ENCODE measurements at regions of chr11 and their contacts with region 1.

Region 1: GRCh38 chr11:9613118-9613829 is 39.8 kb downstream of the WEE1 start:
- DNase-seq: peak; percentile 97
- H3K4me3 ChIP-seq: peak overlapping the region; percentile 32 to 60 (median 48)
- H3K27ac ChIP-seq: peak overlapping the region; percentile 90 to 98 (median 98)
- H3K4me1 ChIP-seq: peaks cover 0 to 26% (median 18%) of the 10 kb centered on the region in 4 donors
- H3K27me3 ChIP-seq: no peaks in the 10 kb centered on the region
- CTCF ChIP-seq: peak; percentile 84 to 97 (median 92)
- EP300 ChIP-seq: peak in 1 of 4 donors; percentile 69
- POLR2A ChIP-seq: peak in 1 of 2 donors; percentile 50

Region 2: DNA sequence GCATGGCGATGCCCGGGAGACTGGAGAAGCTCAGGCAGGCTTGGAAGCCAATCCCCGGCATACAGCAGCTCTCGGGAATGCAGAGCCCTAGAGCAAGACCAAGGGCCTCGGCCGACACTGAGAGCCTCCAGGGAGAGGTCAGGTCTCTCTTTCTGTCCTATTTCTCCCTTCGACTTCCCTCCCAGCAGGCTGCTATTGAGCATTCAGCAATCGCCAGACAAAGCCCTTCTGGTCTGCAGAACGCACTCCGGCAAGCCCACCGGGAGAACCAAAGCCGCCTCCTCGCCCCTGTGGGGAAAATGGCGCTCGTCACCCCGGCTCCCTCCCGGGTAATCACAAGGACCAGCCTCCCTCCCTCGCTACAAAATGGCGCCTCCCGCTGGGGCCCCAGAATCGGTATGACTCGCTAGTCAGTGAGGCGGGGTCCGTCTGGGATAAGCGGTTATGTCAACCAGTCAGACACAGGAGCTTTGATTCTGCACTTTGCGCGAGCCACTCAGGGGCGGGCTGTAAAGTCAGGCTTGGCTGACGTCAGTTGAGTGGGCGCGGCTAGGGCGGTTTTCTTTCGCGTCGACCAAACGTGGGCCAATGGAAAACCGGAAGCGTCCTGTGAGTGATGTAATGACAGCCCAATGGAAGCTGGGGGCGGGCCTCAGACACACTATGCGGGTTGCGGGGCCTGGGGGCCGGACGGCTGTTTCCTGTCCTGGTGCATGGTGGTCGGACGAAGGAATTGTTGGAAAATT is 152.8 kb before region 1 on chr11 and contains the start of gene ZNF143:
- intact Hi-C with region 1: loop called (anchors 2 kb)
- DNase-seq: peak; percentile 100
- H3K4me3 ChIP-seq: peak within 1 kb of the TSS; percentile 68 to 95 (median 82)
- H3K27ac ChIP-seq: peak within 1 kb of the TSS; percentile 95 to 100 (median 100)
- H3K4me1 ChIP-seq: peaks cover 0 to 27% (median 20%) of the 10 kb centered on the region in 4 donors
- H3K27me3 ChIP-seq: no peaks in the 10 kb centered on the region
- CTCF ChIP-seq: peak in 2 of 4 experiments; percentile 4 to 28
- EP300 ChIP-seq: peak in 1 of 4 donors; percentile 8
- POLR2A ChIP-seq: peak; percentile 99
- total RNA-seq, gene ZNF143: 20.2 to 48.4 (median 32.4) TPM

Region 3: GRCh38 chr11:9527481-9528140 is 85.7 kb before region 1 on chr11:
- intact Hi-C with region 1: loop called (anchors 5 kb)
- DNase-seq: peak; percentile 74
- H3K4me3 ChIP-seq: no peak overlapping the region
- H3K27ac ChIP-seq: peak overlapping the region; percentile 67 to 82 (median 74)
- H3K4me1 ChIP-seq: peaks cover 0 to 50% (median 38%) of the 10 kb centered on the region in 4 donors
- H3K27me3 ChIP-seq: no peaks in the 10 kb centered on the region
- CTCF ChIP-seq: no peak
- EP300 ChIP-seq: no peak
- POLR2A ChIP-seq: no peak

Region 4: DNA sequence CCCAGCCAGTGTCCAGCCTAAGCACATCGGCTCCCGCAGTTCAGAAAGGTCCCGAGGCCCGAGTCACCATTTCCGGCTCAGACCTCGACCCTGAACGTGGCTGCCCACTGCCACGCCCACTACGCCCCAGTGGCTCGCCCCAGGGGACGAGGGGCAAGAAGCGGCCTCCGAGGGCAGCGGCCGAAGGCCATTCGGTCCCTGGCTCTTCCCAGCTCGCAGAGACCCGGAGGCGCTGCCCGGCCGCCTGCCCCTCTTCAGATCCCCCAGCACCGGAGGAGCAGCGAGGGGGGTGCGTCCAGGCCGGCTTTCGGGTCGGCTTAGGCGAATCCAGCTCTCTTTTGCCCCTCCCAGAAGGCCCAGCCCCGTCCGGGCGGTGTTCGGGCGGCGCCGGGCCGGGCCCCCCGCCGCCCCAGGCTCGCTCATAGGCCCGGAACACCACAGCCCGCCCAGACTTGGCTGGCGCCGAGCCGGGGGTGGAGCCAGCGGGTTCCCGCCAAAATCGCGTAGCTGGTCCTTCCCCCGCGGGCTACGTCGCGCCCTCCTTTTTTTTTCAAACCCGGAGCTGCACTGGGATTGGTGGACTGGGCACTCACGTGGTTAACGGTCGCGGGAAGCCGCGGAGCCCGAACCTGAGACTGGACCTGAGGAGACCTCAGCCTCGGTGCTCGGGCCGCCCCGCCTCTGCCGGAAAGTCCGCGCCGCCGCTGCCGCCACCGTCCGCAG is 40.1 kb before region 1 on chr11 and contains the start of gene WEE1:
- intact Hi-C with region 1: loop called (anchors 2 kb)
- DNase-seq: peak; percentile 99
- H3K4me3 ChIP-seq: peak within 1 kb of the TSS; percentile 64 to 87 (median 86)
- H3K27ac ChIP-seq: peak within 1 kb of the TSS; percentile 95 to 99 (median 97)
- H3K4me1 ChIP-seq: peaks cover 0 to 39% (median 28%) of the 10 kb centered on the region in 4 donors
- H3K27me3 ChIP-seq: no peaks in the 10 kb centered on the region
- CTCF ChIP-seq: no peak
- EP300 ChIP-seq: no peak
- POLR2A ChIP-seq: peak; percentile 55 to 82
- total RNA-seq, gene WEE1: 32.4 to 38.8 (median 35.0) TPM

Region 5: GRCh38 chr11:9663699-9664275 is 50.5 kb after region 1 on chr11 and contains the start of gene SWAP70:
- intact Hi-C with region 1: loop called (anchors 2 kb)
- DNase-seq: peak; percentile 95
- H3K4me3 ChIP-seq: peak within 1 kb of the TSS; percentile 69 to 99 (median 84)
- H3K27ac ChIP-seq: peak within 1 kb of the TSS; percentile 86 to 99 (median 93)
- H3K4me1 ChIP-seq: peaks cover 0 to 16% (median 5%) of the 10 kb centered on the region in 4 donors
- H3K27me3 ChIP-seq: no peaks in the 10 kb centered on the region
- CTCF ChIP-seq: peak; percentile 59 to 84 (median 72)
- EP300 ChIP-seq: no peak
- POLR2A ChIP-seq: peak; percentile 21 to 37
- total RNA-seq, gene SWAP70: 22.1 to 30.3 (median 28.6) TPM

Region 6: GRCh38 chr11:9748361-9748970 is 135.2 kb after region 1 on chr11:
- intact Hi-C with region 1: loop called (anchors 2 kb)
- DNase-seq: peak; percentile 77
- H3K4me3 ChIP-seq: no peak overlapping the region
- H3K27ac ChIP-seq: peak overlapping the region; percentile 25 to 63 (median 53)
- H3K4me1 ChIP-seq: peaks cover 0 to 25% (median 9%) of the 10 kb centered on the region in 4 donors
- H3K27me3 ChIP-seq: no peaks in the 10 kb centered on the region
- CTCF ChIP-seq: peak; percentile 34 to 71 (median 66)
- EP300 ChIP-seq: no peak
- POLR2A ChIP-seq: no peak

Region 7: GRCh38 chr11:9972989-9973388 is 359.7 kb after region 1 on chr11:
- intact Hi-C with region 1: loop called (anchors 10 kb)
- DNase-seq: no peak
- H3K4me3 ChIP-seq: no peak overlapping the region
- H3K27ac ChIP-seq: no peak overlapping the region
- H3K4me1 ChIP-seq: peaks cover 0 to 5% (median 2%) of the 10 kb centered on the region in 4 donors
- H3K27me3 ChIP-seq: no peaks in the 10 kb centered on the region
- CTCF ChIP-seq: peak; percentile 37 to 63 (median 60)
- EP300 ChIP-seq: no peak
- POLR2A ChIP-seq: no peak